ENCODE measurements at regions of chr17 and their contacts with region 1.

Region 1: DNA sequence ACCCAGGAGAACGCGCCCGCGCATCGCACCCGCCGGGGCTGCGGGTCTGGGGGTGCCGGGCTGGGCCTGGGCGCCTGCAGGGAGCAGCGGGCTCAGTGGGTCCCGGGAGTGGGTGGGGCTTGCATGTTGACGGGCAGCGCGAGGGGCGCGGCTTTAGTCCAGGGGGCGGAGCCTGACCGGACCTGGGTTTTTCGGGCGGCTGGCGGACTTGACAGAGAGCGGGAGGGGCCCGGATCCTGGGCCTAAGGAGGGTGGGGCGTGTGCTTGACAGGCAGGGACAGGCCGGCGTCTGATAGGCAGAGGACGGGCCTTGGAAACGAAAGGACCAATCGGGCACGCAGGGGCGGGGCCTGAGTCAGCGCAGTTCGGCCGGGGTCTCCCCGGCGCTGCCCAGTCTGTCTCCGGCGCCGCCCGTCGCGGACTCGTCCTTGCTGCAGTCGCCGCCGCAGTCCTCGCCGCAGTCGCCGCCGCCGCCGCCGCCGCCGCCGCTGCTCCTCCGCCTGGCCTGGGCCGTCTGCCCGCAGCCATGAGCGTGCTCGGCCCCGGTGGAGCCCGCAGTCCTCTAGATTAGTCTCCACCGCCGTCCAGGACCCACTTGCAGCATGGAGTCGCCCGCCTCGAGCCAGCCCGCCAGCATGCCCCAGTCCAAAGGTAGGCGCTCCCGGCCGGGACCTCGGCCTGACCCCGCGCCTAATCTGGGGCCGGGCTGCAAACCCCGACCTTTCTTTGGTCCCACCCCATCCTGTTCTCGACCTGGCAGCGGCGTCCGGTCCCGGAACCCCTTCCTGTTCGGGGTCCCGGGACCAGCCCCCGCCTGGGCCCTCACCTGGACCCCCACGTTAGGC is at the start of gene MAP2K3:
- DNase-seq: peak; percentile 99
- H3K4me3 Mint-ChIP-seq: peak within 1 kb of the TSS; percentile 98
- H3K27ac Mint-ChIP-seq: peak within 1 kb of the TSS; percentile 89
- H3K4me1 Mint-ChIP-seq: peaks cover 50% of the 10 kb centered on the region
- H3K27me3 Mint-ChIP-seq: no peaks in the 10 kb centered on the region
- total RNA-seq, gene MAP2K3: 132 to 134 TPM

Region 2: DNA sequence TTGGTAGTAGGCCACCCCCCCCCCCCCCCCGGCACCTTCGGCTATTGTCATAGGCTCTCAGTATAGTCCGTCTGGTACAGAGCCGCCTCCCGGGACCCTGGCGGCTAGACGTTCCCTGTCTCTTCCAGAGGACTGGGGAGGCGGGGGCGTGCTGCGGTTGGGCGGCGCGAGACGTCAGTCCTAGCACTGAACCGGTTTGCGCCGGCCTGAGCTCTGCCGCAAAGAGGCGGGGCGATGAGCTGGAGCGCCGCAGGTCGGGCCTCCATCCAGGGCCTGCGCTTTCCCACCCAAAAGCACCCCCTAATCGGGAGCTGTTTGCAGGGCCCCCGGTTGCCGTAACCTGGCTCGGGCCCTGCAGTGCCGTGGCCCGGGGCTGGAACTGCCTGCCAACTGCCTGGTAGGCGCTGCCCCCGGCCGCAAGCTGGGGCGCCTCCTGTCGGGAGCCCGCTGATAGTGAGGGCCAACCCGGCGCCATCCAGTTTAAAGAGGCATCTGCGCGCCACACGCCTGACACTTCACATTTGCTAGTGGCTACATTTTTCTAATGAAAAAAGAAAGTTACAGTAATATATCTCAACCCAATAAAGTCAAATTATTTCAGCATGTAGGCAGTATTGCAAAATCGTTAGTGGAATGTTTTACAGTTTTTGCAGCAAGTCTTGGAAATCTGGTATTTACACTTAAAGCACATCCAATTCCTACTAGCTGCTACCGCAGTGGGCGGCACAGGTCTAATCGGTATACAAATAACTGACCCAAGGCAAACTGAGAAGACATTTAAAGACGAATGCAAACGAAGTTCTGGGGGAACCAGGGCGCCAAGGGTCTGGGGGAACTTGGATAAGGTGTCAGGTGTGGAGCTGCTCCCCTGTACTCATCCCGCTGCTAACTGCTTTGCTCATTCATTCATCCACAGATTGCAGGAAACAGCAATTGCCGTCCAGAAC is 241.0 kb before region 1 on chr17:
- CTCF ChIA-PET with region 1: interaction called, 5 read pairs
- POLR2A ChIA-PET with region 1: interaction called, 11 read pairs
- intact Hi-C with region 1: loop called (anchors 1 kb)
- DNase-seq: peak; percentile 98
- H3K4me3 Mint-ChIP-seq: peak overlapping the region; percentile 78
- H3K27ac Mint-ChIP-seq: peak overlapping the region; percentile 90
- H3K4me1 Mint-ChIP-seq: peaks cover 24% of the 10 kb centered on the region
- H3K27me3 Mint-ChIP-seq: no peaks in the 10 kb centered on the region

Region 3: DNA sequence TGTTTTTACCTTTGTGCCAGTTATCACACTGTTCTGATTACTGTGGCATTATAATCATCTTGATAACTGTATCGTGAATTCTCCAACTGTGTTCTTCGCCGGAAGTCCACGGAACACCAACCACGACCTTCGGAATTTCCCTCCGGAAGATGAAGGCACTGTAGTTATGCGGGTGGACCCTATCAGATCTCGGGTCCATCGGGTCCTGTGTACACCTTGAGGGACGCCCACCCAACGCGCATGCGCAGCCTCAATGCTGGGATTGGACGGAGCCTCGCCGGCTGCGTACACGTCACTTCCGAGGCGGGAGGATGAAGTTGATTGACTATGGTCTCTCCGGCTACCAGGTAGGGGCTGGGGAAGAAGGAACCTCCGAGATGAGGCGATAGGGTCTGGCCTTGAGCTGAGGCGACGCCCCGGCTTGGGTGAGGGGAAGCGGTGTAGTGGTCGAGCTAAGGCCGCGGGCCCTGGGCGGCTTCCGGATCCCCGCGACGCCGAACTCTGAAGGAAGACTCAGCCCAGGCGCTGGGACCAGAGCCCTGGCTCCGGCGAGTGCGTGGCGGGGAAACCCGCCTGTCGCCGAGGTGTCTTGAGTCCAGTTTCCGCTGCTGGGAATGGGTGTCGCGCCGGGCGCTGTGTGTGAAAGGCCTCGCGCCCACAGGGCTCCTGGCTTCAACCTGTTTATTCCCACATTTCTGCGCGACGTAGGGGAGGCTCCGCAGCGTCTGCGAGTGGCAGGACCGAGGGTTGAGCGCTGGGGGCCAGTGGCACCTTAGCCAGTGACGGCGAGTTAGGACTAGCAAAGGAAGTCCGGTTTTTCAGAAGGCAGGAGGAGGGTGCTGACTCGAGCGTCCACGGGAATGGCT is 157.7 kb before region 1 on chr17 and contains the start of gene DHRS7B:
- CTCF ChIA-PET with region 1: interaction called, 30 read pairs
- POLR2A ChIA-PET with region 1: no interaction called
- intact Hi-C with region 1: loop called (anchors 1 kb)
- DNase-seq: peak; percentile 98
- H3K4me3 Mint-ChIP-seq: peak within 1 kb of the TSS; percentile 90
- H3K27ac Mint-ChIP-seq: peak within 1 kb of the TSS; percentile 88
- H3K4me1 Mint-ChIP-seq: peaks cover 31% of the 10 kb centered on the region
- H3K27me3 Mint-ChIP-seq: peaks cover 1% of the 10 kb centered on the region
- total RNA-seq, gene DHRS7B: 13.5 to 15.9 TPM

Region 4: DNA sequence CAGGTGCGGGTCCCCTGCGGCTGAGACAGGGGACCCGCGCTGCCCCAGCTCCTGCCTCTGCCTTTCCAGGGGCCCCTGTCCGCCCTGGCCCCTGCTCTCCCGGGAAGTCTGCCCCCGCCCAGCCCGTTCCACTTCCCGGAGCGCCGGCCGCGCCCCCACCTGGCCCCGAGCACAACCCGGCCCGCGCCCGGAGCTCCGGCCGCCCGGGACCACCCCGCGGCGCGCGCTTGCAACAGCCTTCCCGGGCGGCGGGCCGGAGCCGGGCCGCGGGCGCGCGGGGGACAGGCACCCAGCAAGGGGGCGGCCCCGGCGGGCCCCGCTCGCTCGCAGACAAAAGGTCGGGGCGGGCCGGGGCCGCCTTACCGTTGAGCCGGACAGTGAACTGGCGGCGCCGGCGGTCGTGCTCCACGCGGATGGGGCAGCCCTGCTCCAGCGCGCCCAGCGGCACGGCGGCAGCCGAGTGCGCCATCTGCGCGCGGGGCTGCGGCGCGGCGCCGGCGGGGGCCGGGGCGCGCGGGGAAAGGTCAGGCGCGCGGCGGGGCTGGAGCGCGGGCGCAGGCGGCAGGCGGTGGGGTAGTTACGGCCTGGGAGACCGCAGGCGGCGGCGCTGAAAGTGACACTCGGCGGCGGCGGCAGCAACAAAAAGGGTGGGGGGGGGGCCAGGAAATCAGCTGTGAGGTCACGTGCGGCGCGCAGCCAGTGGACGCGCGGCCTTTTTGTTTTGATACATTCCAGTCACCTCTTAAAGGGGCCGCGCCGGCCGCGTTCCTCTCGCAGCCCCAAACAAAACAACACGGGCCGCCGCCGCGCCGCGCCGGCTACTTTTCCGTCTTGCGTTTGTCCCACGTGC is 31.5 kb before region 1 on chr17 and contains the start of gene NATD1:
- CTCF ChIA-PET with region 1: interaction called, 7 read pairs
- POLR2A ChIA-PET with region 1: no interaction called
- intact Hi-C with region 1: loop called (anchors 1 kb)
- DNase-seq: peak; percentile 86
- H3K4me3 Mint-ChIP-seq: peak within 1 kb of the TSS; percentile 81
- H3K27ac Mint-ChIP-seq: peak within 1 kb of the TSS; percentile 38
- H3K4me1 Mint-ChIP-seq: peaks cover 14% of the 10 kb centered on the region
- H3K27me3 Mint-ChIP-seq: no peaks in the 10 kb centered on the region
- total RNA-seq, gene NATD1: 3.0 to 3.2 TPM

Region 5: DNA sequence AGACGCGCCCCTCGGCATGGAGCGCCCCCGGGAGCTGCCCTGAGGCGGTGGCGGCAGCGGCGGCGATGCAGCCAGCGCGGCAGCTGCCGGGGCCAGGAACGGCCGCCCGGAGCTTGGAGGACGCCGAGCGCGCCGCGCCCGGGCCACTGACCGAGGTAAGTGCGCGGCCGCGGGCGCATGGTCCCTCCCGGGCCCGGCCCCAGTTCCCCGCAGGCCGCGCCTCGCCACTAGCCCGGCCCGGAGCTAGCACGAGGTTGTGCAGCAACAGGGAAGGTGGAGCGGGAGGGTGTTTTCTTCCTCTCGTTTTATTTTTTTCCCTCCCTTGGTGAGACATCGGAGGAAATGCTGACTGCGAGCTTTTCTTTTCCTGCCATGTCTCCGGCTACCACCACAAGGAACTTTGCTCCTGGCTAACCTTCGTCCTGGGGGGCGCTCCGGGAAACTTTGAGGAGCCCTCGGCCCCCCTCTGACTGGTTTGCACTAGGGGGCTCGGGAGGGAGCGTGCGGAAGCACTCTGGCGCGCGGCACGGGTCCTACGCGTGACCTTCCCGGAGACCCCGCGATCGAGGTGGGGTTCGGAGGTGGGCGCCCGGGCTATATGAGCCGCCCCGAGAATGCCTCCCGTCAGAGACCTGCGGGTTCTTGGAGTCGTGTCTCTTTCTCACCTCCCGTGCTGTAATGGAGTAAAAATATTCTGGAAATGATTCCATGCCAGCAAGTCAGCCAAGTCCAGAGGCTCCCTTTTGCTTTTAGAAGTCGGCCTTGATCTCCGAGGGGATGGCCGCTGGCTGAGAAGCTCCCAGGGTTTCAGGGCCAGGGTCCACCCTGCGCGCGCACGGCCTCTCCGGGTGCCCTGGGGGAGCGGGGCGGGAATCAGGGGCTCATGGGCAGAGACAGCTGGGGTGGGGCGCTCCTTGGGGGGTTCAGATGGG is 92.5 kb after region 1 on chr17:
- CTCF ChIA-PET with region 1: interaction called, 5 read pairs
- POLR2A ChIA-PET with region 1: no interaction called
- intact Hi-C with region 1: loop called (anchors 5 kb)
- DNase-seq: no peak
- H3K4me3 Mint-ChIP-seq: no peak overlapping the region
- H3K27ac Mint-ChIP-seq: no peak overlapping the region
- H3K4me1 Mint-ChIP-seq: peaks cover 9% of the 10 kb centered on the region
- H3K27me3 Mint-ChIP-seq: peaks cover 28% of the 10 kb centered on the region

Region 6: DNA sequence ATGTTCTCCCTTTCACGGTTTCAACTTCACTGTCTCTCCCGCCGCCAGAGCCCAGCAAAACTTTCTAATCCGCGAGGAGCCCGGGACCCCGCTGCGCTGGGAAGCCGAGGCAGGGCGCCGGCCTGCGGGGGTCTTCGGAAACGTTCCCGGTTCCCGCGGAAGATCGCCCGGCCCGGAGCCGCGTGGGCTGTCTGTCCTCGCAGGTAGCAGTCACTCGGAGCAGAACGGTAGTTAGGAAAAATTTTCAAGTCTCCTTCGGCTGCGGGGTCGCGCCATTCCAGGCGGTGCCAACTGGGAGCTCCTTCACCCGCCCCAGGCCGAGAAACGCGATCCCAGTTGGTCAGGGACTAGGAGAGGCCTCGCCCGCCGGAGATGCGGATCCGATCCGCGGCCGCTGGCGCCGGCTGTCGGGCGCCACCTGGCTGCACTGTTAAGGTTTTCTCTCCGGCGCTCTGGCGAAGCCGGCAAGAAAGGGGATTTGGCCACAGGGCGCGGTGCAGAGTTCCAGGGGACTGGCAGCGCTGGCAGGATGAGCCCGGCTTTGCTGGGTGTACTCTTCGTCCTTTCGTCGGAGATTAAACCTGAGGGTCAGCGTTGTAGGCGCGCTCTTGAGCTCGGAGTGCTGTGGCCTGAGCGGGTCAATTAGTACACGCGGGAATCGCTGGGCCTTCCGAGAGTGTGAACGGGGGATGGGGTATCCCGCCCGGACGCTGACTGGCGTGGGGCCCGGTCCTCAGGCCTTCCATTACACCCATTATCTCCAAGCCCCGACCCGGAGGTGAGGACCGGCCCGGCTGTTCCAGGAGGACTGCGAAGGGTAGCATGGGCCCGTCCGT is 227.0 kb after region 1 on chr17:
- CTCF ChIA-PET with region 1: interaction called, 28 read pairs
- POLR2A ChIA-PET with region 1: no interaction called
- intact Hi-C with region 1: loop called (anchors 1 kb)
- DNase-seq: peak; percentile 78
- H3K4me3 Mint-ChIP-seq: peak overlapping the region; percentile 61
- H3K27ac Mint-ChIP-seq: no peak overlapping the region
- H3K4me1 Mint-ChIP-seq: peaks cover 16% of the 10 kb centered on the region
- H3K27me3 Mint-ChIP-seq: peaks cover 23% of the 10 kb centered on the region